ENCODE measurements at regions of chr5 and their contacts with region 1.

Region 1: GRCh38 chr5:55320571-55320970 is 12.8 kb downstream of the MTREX start:
- DNase-seq: no peak
- H3K4me3 ChIP-seq: no peak overlapping the region
- H3K27ac ChIP-seq: no peak overlapping the region
- H3K4me1 ChIP-seq: no peaks in the 10 kb centered on the region
- H3K27me3 ChIP-seq: no peaks in the 10 kb centered on the region
- CTCF ChIP-seq: no peak
- POLR2A ChIP-seq: no peak

Region 2: GRCh38 chr5:55294935-55295334 is 25.6 kb before region 1 on chr5:
- intact Hi-C with region 1: loop called (anchors 1 kb)
- DNase-seq: no peak
- H3K4me3 ChIP-seq: no peak overlapping the region
- H3K27ac ChIP-seq: no peak overlapping the region
- H3K4me1 ChIP-seq: no peaks in the 10 kb centered on the region
- H3K27me3 ChIP-seq: no peaks in the 10 kb centered on the region
- CTCF ChIP-seq: no peak
- POLR2A ChIP-seq: no peak